Transverse colon (tissue), 4 donors: ENCODE measurements at regions of chr22 and their contacts with region 1.

Region 1: GRCh38 chr22:24525416-24526037 is 29.4 kb downstream of the GUCD1 start:
- DNase-seq: peak; percentile 82
- H3K4me3 ChIP-seq: no peak overlapping the region
- H3K27ac ChIP-seq: no peak overlapping the region
- H3K4me1 ChIP-seq: peaks cover 0 to 11% (median 2%) of the 10 kb centered on the region in 4 donors
- H3K27me3 ChIP-seq: no peaks in the 10 kb centered on the region
- CTCF ChIP-seq: peak; percentile 83 to 89 (median 87)
- EP300 ChIP-seq: no peak
- POLR2A ChIP-seq: no peak

Region 2: GRCh38 chr22:24270638-24271408 is 254.7 kb before region 1 on chr22 and contains the start of gene SPECC1L:
- in situ Hi-C with region 1: no loop called
- intact Hi-C with region 1: no loop called
- DNase-seq: peak; percentile 94
- H3K4me3 ChIP-seq: peak within 1 kb of the TSS; percentile 39 to 95 (median 87)
- H3K27ac ChIP-seq: peak within 1 kb of the TSS; percentile 97 to 98 (median 97)
- H3K4me1 ChIP-seq: peaks cover 9 to 45% (median 36%) of the 10 kb centered on the region in 4 donors
- H3K27me3 ChIP-seq: no peaks in the 10 kb centered on the region
- CTCF ChIP-seq: peak in 2 of 5 experiments; percentile 33 to 39
- EP300 ChIP-seq: no peak
- POLR2A ChIP-seq: peak; percentile 92
- total RNA-seq, gene SPECC1L: 50.4 to 125 (median 68.0) TPM

Region 3: DNA sequence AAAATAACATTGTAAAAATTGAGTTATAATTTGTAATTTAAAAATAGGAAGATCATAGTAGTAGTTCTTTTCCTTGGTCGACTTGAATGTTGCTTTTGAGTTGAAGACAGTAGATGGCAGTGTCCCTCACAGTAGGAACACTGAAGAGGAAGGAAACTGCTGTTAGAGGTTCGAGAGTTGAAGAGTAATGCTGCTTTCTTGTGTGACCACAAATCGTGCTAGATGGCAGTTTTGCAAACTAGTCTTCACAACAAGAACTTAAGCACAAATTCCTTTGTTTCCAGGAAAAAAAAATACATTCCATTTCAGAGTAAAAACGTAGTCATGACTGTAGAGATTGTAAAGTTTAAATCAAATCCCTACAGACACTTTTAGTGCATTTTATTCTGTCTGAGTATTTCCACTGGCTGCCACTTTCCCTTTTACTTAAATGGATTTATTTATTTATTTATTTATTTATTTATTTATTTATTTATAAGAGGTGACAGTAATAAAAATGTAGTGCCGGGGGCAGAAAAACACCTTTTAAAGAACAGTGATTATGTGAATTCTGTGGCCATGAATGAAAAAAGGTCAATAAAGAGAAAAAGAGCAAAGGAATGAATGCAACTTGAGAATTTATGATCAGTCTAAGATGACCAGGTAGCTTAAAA is 200.3 kb before region 1 on chr22:
- in situ Hi-C with region 1: loop called in 3 of 4 experiments (anchors 5 to 10 kb)
- intact Hi-C with region 1: loop called (anchors 10 kb)
- DNase-seq: no peak
- H3K4me3 ChIP-seq: no peak overlapping the region
- H3K27ac ChIP-seq: peak overlapping the region in 2 of 4 donors; percentile 12 to 21
- H3K4me1 ChIP-seq: peaks cover 0 to 31% (median 17%) of the 10 kb centered on the region in 4 donors
- H3K27me3 ChIP-seq: no peaks in the 10 kb centered on the region
- CTCF ChIP-seq: peak; percentile 54 to 65 (median 55)
- EP300 ChIP-seq: no peak
- POLR2A ChIP-seq: no peak

Region 4: GRCh38 chr22:24338726-24339451 is 186.6 kb before region 1 on chr22:
- in situ Hi-C with region 1: no loop called
- intact Hi-C with region 1: loop called (anchors 10 kb)
- DNase-seq: no peak
- H3K4me3 ChIP-seq: no peak overlapping the region
- H3K27ac ChIP-seq: no peak overlapping the region
- H3K4me1 ChIP-seq: peaks cover 0 to 18% (median 9%) of the 10 kb centered on the region in 4 donors
- H3K27me3 ChIP-seq: no peaks in the 10 kb centered on the region
- CTCF ChIP-seq: no peak
- EP300 ChIP-seq: no peak
- POLR2A ChIP-seq: no peak

Region 5: DNA sequence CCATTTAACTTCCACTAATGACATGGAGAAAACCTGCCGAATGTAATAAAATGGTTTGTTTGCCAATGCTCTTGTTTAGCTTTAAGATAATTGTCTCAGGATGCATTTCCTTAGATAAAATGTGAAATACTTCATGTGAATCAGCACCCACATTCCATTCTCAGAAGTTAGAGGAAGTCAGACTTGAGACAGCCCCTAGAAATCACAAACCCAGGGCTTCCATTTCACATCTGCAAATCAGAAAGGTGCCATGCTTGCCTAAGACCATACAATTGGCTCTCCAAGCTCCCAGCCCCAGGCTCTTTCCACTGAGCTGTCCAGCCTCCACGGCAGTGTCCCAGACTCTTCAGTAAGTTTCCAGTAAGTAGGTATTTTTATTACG is 133.7 kb before region 1 on chr22:
- in situ Hi-C with region 1: no loop called
- intact Hi-C with region 1: no loop called
- DNase-seq: no peak
- H3K4me3 ChIP-seq: no peak overlapping the region
- H3K27ac ChIP-seq: peak overlapping the region in 2 of 4 donors; percentile 27 to 31
- H3K4me1 ChIP-seq: peaks cover 8 to 32% (median 8%) of the 10 kb centered on the region in 4 donors
- H3K27me3 ChIP-seq: no peaks in the 10 kb centered on the region
- CTCF ChIP-seq: no peak
- EP300 ChIP-seq: no peak
- POLR2A ChIP-seq: no peak

Region 6: DNA sequence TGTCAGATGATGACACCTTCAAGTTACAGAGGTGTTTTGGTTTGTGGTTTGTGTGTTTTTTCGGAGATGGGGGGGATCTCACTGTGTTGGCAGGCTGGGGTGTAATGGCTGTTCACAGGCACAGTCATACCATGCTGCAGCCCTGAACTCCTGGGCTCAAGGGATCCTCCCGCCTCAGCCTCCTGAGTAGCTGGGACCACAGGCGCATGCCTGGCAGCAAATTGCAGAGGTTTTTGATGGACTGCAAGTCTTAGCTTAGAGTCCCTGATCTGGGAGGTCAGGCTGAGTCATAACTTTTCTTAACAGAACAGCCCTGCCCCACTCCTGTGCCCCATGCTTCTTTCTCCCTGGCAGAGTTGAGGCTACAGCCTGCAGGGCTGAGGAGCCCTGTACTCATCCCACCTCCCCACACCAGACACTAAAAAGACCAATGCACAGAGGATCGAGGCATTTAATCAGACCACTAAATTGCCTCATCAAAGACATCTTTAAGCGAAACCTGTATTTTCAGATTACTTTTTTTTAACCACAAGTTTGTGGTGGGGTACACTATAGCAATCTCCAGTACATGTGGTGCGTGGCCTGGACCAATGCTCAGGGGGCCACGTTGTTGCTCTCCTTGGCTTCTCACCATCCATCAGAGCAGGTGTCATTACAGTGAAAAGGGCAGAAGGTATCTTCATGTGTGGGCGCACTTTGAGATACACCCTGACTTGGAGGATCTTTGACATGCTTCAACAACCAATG is 115.2 kb before region 1 on chr22:
- in situ Hi-C with region 1: loop called in 1 of 4 experiments (anchors 10 kb)
- intact Hi-C with region 1: no loop called
- DNase-seq: no peak
- H3K4me3 ChIP-seq: no peak overlapping the region
- H3K27ac ChIP-seq: no peak overlapping the region
- H3K4me1 ChIP-seq: peaks cover 0 to 2% (median 0%) of the 10 kb centered on the region in 4 donors
- H3K27me3 ChIP-seq: no peaks in the 10 kb centered on the region
- CTCF ChIP-seq: no peak
- EP300 ChIP-seq: no peak
- POLR2A ChIP-seq: no peak

Region 7: GRCh38 chr22:24423519-24424000 is 102.0 kb before region 1 on chr22:
- in situ Hi-C with region 1: loop called in 2 of 4 experiments (anchors 10 kb)
- intact Hi-C with region 1: no loop called
- DNase-seq: peak; percentile 56
- H3K4me3 ChIP-seq: peak overlapping the region; percentile 32 to 54 (median 45)
- H3K27ac ChIP-seq: peak overlapping the region in 3 of 4 donors; percentile 5 to 12 (median 7)
- H3K4me1 ChIP-seq: peaks cover 0 to 13% (median 11%) of the 10 kb centered on the region in 4 donors
- H3K27me3 ChIP-seq: peaks cover 25% of the 10 kb centered on the region
- CTCF ChIP-seq: peak; percentile 43 to 94 (median 81)
- EP300 ChIP-seq: no peak
- POLR2A ChIP-seq: no peak

Region 8: GRCh38 chr22:24445481-24446259 is 79.9 kb before region 1 on chr22:
- in situ Hi-C with region 1: no loop called
- intact Hi-C with region 1: no loop called
- DNase-seq: no peak
- H3K4me3 ChIP-seq: no peak overlapping the region
- H3K27ac ChIP-seq: no peak overlapping the region
- H3K4me1 ChIP-seq: no peaks in the 10 kb centered on the region
- H3K27me3 ChIP-seq: no peaks in the 10 kb centered on the region
- CTCF ChIP-seq: no peak
- EP300 ChIP-seq: no peak
- POLR2A ChIP-seq: no peak

Region 9: GRCh38 chr22:24583221-24584165 is 58.0 kb after region 1 on chr22:
- in situ Hi-C with region 1: no loop called
- intact Hi-C with region 1: no loop called
- DNase-seq: peak; percentile 32
- H3K4me3 ChIP-seq: peak overlapping the region in 1 of 4 donors; percentile 16
- H3K27ac ChIP-seq: peak overlapping the region; percentile 50 to 80 (median 64)
- H3K4me1 ChIP-seq: peaks cover 12 to 42% (median 28%) of the 10 kb centered on the region in 4 donors
- H3K27me3 ChIP-seq: no peaks in the 10 kb centered on the region
- CTCF ChIP-seq: no peak
- EP300 ChIP-seq: no peak
- POLR2A ChIP-seq: no peak

Region 10: GRCh38 chr22:24758164-24758799 is 232.8 kb after region 1 on chr22:
- in situ Hi-C with region 1: no loop called
- intact Hi-C with region 1: loop called (anchors 10 kb)
- DNase-seq: peak; percentile 53
- H3K4me3 ChIP-seq: no peak overlapping the region
- H3K27ac ChIP-seq: no peak overlapping the region
- H3K4me1 ChIP-seq: no peaks in the 10 kb centered on the region
- H3K27me3 ChIP-seq: peaks cover 7% of the 10 kb centered on the region
- CTCF ChIP-seq: peak; percentile 75 to 94 (median 90)
- EP300 ChIP-seq: no peak
- POLR2A ChIP-seq: no peak